ENCODE measurements at regions of chr4 and their contacts with region 1.

Region 1: DNA sequence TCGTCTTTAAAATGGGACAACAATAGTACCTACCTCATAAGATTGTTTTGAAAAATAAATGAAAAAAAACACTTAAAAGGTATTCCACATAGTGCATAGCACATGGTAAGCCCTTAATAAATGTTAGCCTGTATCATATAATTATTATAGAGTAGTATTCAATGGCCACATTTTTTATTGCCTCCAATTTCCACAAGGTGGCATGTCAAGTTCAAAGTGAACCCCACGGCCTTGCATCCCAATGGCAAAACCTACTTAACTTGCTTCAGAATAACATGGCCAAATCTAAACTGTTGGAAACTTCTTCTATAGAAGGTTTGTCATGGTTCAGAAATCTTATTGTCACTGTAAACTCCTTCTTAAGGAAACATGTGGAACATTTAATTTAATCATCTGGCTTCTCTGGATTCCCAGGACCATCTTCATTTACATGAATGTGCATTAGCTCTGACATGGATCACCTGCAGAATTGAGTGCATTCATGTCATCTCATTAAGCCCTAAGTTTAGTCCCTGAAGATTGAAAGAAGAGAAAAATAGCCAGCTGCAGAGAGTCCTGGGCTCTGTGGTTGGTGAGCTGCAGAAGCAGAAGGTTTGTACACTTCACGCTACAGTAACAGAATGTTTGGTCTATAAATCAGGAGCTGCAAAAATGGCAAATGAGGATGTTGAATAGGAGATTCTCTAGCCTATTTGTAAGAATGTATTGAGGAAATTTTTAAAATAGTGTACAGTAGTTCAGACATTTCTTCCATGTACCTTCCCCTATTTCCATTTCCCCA is 61.0 kb downstream of the ANXA3 start:
- DNase-seq: peak in 1 of 3 donors; percentile 61
- ATAC-seq: peak; percentile 72
- H3K4me3 ChIP-seq: no peak overlapping the region
- H3K4me1 ChIP-seq: peaks cover 7% of the 10 kb centered on the region
- CTCF ChIP-seq: no peak

Region 2: GRCh38 chr4:78864405-78865024 is 251.9 kb after region 1 on chr4:
- intact Hi-C with region 1: loop called (anchors 5 to 10 kb)
- DNase-seq: peak in 1 of 3 donors; percentile 63
- ATAC-seq: peak; percentile 71
- H3K4me3 ChIP-seq: no peak overlapping the region
- H3K4me1 ChIP-seq: peaks cover 10% of the 10 kb centered on the region
- CTCF ChIP-seq: peak; percentile 57